ENCODE measurements at regions of chr1 and their contacts with region 1.

Region 1: DNA sequence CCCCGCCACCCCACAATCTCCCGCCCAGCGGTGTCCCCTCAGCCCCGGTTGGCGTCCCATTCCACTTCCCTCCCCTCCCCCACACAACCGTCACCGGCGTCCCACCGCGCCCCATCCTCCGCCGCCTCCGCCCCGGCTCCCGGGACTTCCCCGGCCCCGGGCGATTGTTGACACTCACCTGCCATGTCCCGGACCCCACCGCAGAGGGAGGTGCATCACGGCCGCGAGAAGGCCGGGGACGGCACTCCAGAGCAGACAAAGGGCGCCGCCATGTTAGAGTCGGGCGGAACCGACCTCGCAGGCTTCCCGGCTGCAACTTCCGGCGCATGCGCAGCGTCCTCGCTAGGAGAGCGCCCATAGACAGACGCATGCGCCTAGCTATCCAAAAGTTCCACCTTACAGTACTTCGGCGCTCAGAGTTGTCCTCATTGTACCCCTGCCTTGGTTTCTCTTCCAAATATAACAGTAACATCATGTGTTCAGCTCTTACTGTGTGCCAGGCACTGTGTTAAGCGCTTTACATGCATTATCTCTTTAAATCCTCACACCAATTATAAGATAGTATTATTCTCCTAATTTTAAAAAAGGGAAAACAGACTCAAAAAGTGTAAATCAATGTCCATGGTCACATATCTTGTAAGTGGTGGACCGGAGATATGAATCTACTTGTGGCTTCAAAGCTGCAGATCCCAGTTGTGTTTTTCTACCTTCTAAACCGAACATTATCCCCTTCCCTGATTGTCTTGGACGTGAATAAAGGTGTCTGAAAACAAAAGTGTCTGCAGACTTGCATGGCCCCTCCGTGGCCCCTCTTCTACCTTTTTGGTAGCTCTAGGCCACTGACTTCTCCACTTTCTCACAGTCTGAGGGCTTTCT is at the start of gene ZBTB17:
- H3K4me3 ChIP-seq: peak within 1 kb of the TSS; percentile 98
- H3K27ac ChIP-seq: peak within 1 kb of the TSS; percentile 44
- H3K4me1 ChIP-seq: no peaks in the 10 kb centered on the region
- CTCF ChIP-seq: no peak; the same call in 1 of the 2 replicates

Region 2: DNA sequence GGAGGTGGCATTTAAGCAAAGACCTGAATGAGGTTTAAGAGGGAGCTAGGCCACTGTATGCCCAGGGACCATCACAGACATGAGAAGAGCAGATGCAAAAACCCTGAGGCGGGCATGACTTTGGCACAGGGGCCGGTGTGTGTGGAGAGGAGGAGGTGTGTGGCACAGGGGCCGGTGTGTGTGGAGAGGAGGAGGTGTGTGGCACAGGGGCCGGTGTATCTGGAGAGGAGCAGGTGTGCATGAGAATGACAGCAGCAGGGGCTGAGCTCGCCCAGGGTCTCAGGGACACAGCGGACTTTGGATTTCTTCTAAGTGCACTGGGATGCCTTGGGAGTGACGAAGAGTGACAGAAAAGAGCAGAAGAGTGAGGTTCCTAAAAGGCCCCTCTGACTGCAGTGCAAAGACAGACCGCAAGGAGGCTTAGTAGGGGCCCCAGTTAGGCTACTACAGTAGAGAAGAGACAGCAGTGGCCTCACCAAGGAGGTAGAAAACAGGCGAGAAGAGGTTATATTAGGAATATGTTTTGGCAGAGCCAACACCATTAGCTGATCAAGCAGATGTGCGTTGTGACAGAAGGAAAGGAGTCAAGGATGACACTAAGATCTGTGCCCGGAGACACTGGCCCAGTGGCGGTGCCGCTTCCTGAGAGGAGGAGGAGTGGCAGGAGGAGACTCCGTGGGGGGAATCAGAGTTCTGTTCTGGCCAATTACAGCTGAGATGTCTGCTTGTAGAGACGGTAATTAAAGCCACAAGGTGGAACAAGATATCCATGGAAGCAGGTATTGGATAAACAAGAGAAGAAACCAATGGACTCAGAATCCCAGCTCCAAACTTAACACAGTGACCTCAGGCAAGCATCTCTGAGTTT is 18.6 kb before region 1 on chr1:
- CTCF ChIA-PET with region 1: interaction called, 16 read pairs
- POLR2A ChIA-PET with region 1: interaction called, 6 read pairs
- H3K4me3 ChIP-seq: no peak overlapping the region
- H3K27ac ChIP-seq: no peak overlapping the region
- H3K4me1 ChIP-seq: peaks cover 5% of the 10 kb centered on the region; the same call in 1 of the 2 replicates
- CTCF ChIP-seq: no peak

Region 3: GRCh38 chr1:15994590-15995351 is 18.7 kb after region 1 on chr1:
- CTCF ChIA-PET with region 1: interaction called, 10 read pairs
- POLR2A ChIA-PET with region 1: no interaction called
- H3K4me3 ChIP-seq: no peak overlapping the region
- H3K27ac ChIP-seq: no peak overlapping the region
- H3K4me1 ChIP-seq: no peaks in the 10 kb centered on the region
- CTCF ChIP-seq: peak; percentile 70

Region 4: DNA sequence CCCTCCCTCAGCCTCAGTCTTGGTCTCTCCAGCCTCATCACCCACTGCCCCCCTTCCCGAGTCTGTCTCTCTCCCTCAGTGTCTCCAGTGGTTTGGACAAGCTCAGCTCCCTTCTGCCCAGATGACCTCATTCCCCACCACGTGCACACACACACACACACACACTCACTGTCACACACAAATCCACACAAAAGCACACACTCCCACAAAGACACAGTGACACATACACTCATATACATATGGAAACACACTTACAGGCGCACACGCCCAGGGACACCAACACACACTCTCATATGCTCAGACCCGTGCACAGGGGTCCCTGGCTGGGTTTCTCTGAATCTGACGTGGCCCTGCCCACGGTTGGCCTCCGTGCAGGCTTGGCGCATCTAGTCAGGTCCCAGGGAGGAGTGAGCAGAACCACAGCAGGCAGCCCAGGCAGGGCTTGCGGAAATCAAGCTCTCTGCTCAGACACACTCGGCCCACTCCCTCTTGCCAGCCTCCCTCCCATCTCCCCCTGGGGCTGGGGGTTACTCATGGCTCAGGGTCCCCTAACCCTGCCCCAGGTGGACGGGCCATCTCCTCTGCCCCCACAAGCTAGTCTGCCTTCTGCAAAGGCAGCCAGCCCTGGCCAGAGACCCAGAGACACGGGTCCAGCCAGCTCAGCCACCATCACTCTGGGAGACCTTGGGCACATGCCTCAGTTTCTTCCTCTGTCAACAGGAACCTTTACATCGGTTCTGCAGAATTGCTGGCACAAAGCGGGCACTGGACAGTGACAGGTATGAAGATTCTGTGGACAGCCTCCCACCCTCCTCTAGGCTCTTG is 135.9 kb after region 1 on chr1:
- CTCF ChIA-PET with region 1: no interaction called
- POLR2A ChIA-PET with region 1: no interaction called
- H3K4me3 ChIP-seq: no peak overlapping the region
- H3K27ac ChIP-seq: no peak overlapping the region
- H3K4me1 ChIP-seq: no peaks in the 10 kb centered on the region
- CTCF ChIP-seq: no peak

Measured in HEK293 (cell line).